ENCODE measurements at regions of chrX and their contacts with region 1.

Region 1: GRCh38 chrX:79146640-79147390 is 2.3 kb downstream of the GPR174 start:
- DNase-seq: no peak
- ATAC-seq: peak; percentile 52
- H3K4me3 Mint-ChIP-seq: peak overlapping the region; percentile 88
- H3K27ac Mint-ChIP-seq: peak overlapping the region; percentile 97
- H3K4me1 Mint-ChIP-seq: peaks cover 33% of the 10 kb centered on the region
- H3K27me3 Mint-ChIP-seq: no peaks in the 10 kb centered on the region

Region 2: DNA sequence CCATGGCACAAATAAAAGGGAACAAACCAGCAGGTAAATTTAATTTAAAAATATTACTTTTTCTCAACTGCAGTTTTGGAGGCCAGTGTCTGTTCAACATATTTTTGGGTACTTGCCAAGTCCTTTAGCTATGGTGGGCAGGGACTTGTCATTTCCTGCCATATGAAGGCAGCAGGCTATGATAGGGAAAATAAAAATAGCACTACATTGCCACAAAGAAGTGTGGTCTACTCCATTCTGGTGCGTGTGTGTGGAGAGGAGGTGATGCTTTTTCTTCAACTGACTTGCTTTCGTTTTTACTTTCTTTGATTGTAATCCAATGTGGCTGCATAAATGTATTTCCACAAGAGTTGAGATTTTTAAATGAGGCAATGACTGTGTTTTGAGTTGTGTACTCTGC is 14.8 kb after region 1 on chrX:
- CTCF ChIA-PET with region 1: interaction called, 13 read pairs
- POLR2A ChIA-PET with region 1: no interaction called
- intact Hi-C with region 1: loop called (anchors 1 to 2 kb)
- DNase-seq: peak; percentile 50
- ATAC-seq: peak; percentile 77
- H3K4me3 Mint-ChIP-seq: peak overlapping the region; percentile 75
- H3K27ac Mint-ChIP-seq: peak overlapping the region; percentile 93
- H3K4me1 Mint-ChIP-seq: peaks cover 62% of the 10 kb centered on the region
- H3K27me3 Mint-ChIP-seq: no peaks in the 10 kb centered on the region

Region 3: DNA sequence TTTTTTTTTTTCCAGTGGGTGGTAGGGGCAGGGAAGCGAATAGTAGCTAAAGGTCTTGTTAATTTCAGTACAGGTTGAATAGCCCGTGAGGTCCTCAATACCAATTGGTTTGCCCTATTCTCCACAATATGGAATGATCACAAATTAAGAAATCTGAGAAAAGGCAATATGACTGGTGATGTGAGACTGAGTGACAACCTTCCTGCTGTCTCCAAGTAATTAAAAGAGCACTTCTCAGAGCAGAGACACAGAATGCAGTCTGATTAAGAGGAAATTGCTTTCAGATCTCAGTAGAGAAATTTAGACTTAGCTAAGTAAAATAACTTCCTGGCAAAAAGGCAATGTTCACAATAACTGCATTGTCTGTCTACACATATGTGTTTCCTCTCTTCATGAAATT is 20.6 kb after region 1 on chrX:
- CTCF ChIA-PET with region 1: interaction called, 13 read pairs
- POLR2A ChIA-PET with region 1: no interaction called
- intact Hi-C with region 1: no loop called
- DNase-seq: no peak
- ATAC-seq: peak; percentile 38
- H3K4me3 Mint-ChIP-seq: peak overlapping the region; percentile 64
- H3K27ac Mint-ChIP-seq: peak overlapping the region; percentile 87
- H3K4me1 Mint-ChIP-seq: peaks cover 81% of the 10 kb centered on the region
- H3K27me3 Mint-ChIP-seq: no peaks in the 10 kb centered on the region

Region 4: DNA sequence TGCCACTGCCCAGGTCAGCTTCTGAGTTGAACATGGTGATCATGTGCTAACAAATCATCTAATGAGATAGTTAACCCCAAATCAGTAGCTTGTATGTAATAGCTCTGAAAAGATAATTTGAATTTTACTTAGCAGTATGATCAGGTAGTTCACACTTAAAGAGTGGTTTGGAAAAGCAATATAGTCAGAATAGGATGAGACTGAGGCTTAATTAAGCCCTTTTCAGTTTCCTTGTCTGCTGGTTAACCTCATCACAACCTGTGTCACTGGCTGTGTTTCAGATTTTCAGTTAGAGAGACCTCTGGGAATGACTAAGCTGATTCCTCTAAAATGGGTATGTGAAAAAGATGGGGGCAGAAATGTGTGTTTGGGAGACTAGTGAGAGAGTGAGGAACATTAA is 35.8 kb after region 1 on chrX:
- CTCF ChIA-PET with region 1: no interaction called
- POLR2A ChIA-PET with region 1: interaction called, 4 read pairs
- intact Hi-C with region 1: loop called in 1 of 2 experiments (anchors 5 kb)
- DNase-seq: peak; percentile 27
- ATAC-seq: peak; percentile 88
- H3K4me3 Mint-ChIP-seq: peak overlapping the region; percentile 0
- H3K27ac Mint-ChIP-seq: peak overlapping the region; percentile 23
- H3K4me1 Mint-ChIP-seq: peaks cover 57% of the 10 kb centered on the region
- H3K27me3 Mint-ChIP-seq: no peaks in the 10 kb centered on the region

Region 5: DNA sequence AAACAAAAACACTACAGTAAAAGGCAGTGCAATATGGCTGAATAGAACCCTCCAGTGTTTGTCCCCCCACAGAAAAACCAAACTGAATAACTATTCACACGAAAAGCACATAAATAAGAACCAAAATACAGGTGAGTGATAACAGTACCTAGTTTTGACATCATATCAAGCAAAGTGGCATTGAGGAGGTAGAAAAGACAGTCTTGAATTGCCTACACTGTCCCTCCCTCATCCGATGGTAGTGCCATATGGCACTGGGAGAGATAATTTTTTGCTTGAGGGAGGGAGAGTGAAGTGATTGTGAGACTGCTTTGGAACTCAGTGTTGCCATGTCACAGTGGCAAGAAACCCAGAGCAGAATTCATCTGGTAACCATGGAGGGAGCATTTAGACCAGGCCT is 96.9 kb after region 1 on chrX:
- CTCF ChIA-PET with region 1: no interaction called
- POLR2A ChIA-PET with region 1: no interaction called
- intact Hi-C with region 1: no loop called
- DNase-seq: no peak
- ATAC-seq: peak; percentile 83
- H3K4me3 Mint-ChIP-seq: no peak overlapping the region
- H3K27ac Mint-ChIP-seq: no peak overlapping the region
- H3K4me1 Mint-ChIP-seq: peaks cover 36% of the 10 kb centered on the region
- H3K27me3 Mint-ChIP-seq: no peaks in the 10 kb centered on the region

Measured in activated CD4-positive, alpha-beta T cell treated with anti-CD3 and anti-CD28 coated beads for 36 hours (primary cell).